GM10248 (cell line): ENCODE measurements at regions of chr19 and their contacts with region 1.

Region 1: DNA sequence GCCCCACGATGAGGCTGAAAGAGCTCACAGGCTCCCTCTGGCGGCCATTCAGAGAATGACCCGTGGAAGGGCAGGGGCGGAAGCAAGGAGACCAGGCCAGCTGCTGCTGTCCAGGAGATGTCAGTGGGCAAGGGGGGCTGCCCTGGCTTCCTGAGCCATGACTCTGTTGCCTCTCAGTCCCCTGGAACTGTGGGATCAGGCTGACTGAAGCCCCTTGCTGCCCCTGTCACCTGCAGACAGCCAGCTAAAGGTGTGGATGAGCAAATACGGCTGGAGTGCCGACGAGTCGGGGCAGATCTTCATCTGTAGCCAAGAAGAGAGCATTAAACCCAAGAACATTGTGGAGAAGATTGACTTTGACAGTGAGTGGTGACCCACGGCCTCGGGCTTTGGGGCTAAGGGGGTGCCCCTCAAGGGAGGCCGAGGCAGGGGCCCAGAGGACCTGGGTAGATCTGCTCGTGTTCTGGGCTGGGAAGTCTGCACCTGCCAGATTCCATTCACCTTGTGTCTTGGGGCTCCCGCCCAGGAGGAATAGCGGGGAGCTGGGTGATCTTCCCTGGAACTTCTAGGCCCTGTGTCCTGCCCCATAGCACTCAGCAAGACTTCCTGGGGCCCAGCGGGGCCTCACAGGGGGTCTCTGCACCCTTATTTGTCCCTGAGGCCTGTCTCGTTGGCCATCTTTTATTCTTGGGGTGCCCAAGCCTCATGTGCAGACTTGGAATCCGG is 12.5 kb upstream of the ACTN4 start:
- DNase-seq: peak; percentile 82
- CTCF ChIP-seq: peak; percentile 83

Region 2: GRCh38 chr19:38502410-38503094 is 132.4 kb before region 1 on chr19:
- CTCF ChIA-PET with region 1: no interaction called
- POLR2A ChIA-PET with region 1: no interaction called
- DNase-seq: no peak
- CTCF ChIP-seq: no peak

Region 3: GRCh38 chr19:38514812-38515633 is 119.9 kb before region 1 on chr19:
- CTCF ChIA-PET with region 1: interaction called, 41 read pairs
- POLR2A ChIA-PET with region 1: no interaction called
- DNase-seq: peak; percentile 90
- CTCF ChIP-seq: peak; percentile 91

Region 4: GRCh38 chr19:38544034-38544958 is 90.6 kb before region 1 on chr19:
- CTCF ChIA-PET with region 1: interaction called, 64 read pairs
- POLR2A ChIA-PET with region 1: no interaction called
- DNase-seq: peak; percentile 75
- CTCF ChIP-seq: peak; percentile 28

Region 5: GRCh38 chr19:38551450-38551813 is 83.5 kb before region 1 on chr19:
- CTCF ChIA-PET with region 1: interaction called, 64 read pairs
- POLR2A ChIA-PET with region 1: no interaction called
- DNase-seq: peak; percentile 78
- CTCF ChIP-seq: no peak

Region 6: DNA sequence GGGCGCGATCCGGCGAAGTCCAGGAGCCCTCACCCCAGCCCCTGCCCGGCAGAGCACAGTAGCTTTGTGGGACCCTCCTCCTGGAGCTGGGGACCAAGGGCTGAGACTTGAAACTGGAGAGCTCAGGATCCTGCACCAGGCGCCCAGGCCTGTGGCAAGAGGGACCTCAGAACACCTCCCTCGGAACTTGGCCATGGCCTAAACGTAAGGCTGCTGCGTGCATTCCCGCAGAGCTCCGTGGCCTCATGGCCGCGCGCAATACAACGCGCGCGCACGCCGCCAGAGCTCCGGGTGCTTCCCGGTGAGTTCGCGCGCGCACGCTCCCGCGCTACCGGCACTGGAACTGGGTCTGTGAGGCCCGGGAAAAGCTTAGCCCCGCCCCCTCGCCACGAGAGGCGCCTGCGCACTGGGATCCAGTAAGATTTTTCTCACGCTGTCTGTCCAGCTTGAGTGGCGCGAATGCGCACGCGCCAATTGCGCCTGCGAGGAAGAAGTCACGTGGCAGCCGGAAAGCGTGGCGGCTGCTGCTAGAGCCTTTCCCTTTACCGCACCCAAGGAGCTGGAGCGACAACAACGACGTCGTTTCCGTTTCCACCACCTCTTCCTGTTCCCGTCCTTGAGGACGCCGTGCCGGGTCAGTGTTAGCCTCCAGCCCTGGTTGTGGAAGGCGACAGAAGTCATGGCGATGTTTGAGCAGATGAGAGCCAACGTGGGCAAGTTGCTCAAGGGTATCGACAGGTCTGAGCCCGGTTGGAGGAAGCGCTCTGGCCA is 16.1 kb before region 1 on chr19 and contains the start of gene EIF3K:
- CTCF ChIA-PET with region 1: interaction called, 91 read pairs
- POLR2A ChIA-PET with region 1: no interaction called
- DNase-seq: peak; percentile 99
- CTCF ChIP-seq: no peak

Region 7: GRCh38 chr19:38647368-38647965 is 12.5 kb after region 1 on chr19 and contains the start of gene ACTN4:
- CTCF ChIA-PET with region 1: interaction called, 86 read pairs
- POLR2A ChIA-PET with region 1: interaction called, 4 read pairs
- DNase-seq: peak; percentile 99
- CTCF ChIP-seq: no peak

Region 8: GRCh38 chr19:38658462-38659306 is 23.8 kb after region 1 on chr19:
- CTCF ChIA-PET with region 1: interaction called, 30 read pairs
- POLR2A ChIA-PET with region 1: no interaction called
- DNase-seq: no peak
- CTCF ChIP-seq: no peak